ENCODE measurements at regions of chr9 and their contacts with region 1.

Region 1: GRCh38 chr9:97921959-97922724 is at the start of gene TRMO:
- DNase-seq: peak; percentile 98
- ATAC-seq: peak; percentile 85
- H3K4me3 Mint-ChIP-seq: peak within 1 kb of the TSS; percentile 89
- H3K27ac Mint-ChIP-seq: peak within 1 kb of the TSS; percentile 97
- H3K4me1 Mint-ChIP-seq: peaks cover 49% of the 10 kb centered on the region
- H3K27me3 Mint-ChIP-seq: peaks cover 2% of the 10 kb centered on the region
- total RNA-seq, gene TRMO: 18.7 to 19.2 TPM

Region 2: GRCh38 chr9:97890038-97890437 is 32.1 kb before region 1 on chr9:
- CTCF ChIA-PET with region 1: interaction called, 107 read pairs
- POLR2A ChIA-PET with region 1: interaction called, 9 read pairs
- DNase-seq: peak; percentile 76
- ATAC-seq: peak; percentile 76
- H3K4me3 Mint-ChIP-seq: no peak overlapping the region
- H3K27ac Mint-ChIP-seq: no peak overlapping the region
- H3K4me1 Mint-ChIP-seq: peaks cover 6% of the 10 kb centered on the region
- H3K27me3 Mint-ChIP-seq: no peaks in the 10 kb centered on the region

Region 3: GRCh38 chr9:97911970-97912369 is 10.2 kb before region 1 on chr9:
- CTCF ChIA-PET with region 1: interaction called, 222 read pairs
- POLR2A ChIA-PET with region 1: interaction called, 76 read pairs
- DNase-seq: no peak
- ATAC-seq: no peak
- H3K4me3 Mint-ChIP-seq: no peak overlapping the region
- H3K27ac Mint-ChIP-seq: no peak overlapping the region
- H3K4me1 Mint-ChIP-seq: peaks cover 33% of the 10 kb centered on the region
- H3K27me3 Mint-ChIP-seq: no peaks in the 10 kb centered on the region

Region 4: DNA sequence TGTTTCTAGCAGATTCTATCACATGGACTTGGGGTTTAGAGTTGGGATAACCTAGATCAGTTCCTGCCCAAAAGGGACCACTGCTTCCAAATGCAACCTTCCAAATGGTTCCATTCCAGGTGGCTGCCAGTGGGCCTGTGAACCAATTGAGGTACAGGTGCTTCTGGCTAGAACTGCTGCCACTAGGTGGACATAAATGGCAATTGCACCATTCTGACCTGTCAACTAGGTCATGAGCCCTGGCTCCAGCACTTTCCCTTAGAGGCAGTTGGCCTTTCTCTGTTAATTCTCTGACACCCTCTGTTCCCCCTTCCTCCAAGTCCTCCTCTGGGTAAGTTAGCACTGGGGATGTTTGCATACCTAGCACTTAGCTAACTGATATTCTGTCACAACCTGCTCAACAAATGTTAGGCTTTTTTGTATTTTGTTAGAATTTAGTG is 32.4 kb after region 1 on chr9:
- CTCF ChIA-PET with region 1: interaction called, 106 read pairs
- POLR2A ChIA-PET with region 1: interaction called, 7 read pairs
- DNase-seq: peak; percentile 71
- ATAC-seq: peak; percentile 98
- H3K4me3 Mint-ChIP-seq: no peak overlapping the region
- H3K27ac Mint-ChIP-seq: no peak overlapping the region
- H3K4me1 Mint-ChIP-seq: peaks cover 7% of the 10 kb centered on the region
- H3K27me3 Mint-ChIP-seq: peaks cover 6% of the 10 kb centered on the region

Region 5: DNA sequence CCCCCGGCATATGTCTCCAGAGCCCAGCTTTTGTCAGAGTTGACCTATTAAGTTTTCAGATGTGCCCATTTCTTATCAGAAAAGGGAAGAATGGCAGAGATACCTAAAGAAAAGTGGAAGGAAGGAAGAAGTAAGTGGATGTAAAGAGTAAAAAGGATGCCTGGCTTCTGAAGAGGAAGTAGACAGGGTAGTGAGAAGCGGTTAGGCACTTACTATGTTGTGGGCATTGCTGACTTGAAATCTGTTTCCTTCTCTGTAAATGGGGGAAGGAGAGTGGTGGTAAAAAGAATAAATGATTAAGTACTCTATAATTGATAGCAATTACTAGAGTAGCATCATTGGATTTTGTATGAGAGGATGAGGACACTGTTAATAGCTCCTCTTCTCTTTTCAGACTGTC is 70.9 kb after region 1 on chr9:
- CTCF ChIA-PET with region 1: interaction called, 33 read pairs
- POLR2A ChIA-PET with region 1: interaction called, 110 read pairs
- DNase-seq: no peak
- ATAC-seq: peak; percentile 76
- H3K4me3 Mint-ChIP-seq: peak overlapping the region; percentile 55
- H3K27ac Mint-ChIP-seq: peak overlapping the region; percentile 86
- H3K4me1 Mint-ChIP-seq: peaks cover 84% of the 10 kb centered on the region
- H3K27me3 Mint-ChIP-seq: no peaks in the 10 kb centered on the region

Region 6: DNA sequence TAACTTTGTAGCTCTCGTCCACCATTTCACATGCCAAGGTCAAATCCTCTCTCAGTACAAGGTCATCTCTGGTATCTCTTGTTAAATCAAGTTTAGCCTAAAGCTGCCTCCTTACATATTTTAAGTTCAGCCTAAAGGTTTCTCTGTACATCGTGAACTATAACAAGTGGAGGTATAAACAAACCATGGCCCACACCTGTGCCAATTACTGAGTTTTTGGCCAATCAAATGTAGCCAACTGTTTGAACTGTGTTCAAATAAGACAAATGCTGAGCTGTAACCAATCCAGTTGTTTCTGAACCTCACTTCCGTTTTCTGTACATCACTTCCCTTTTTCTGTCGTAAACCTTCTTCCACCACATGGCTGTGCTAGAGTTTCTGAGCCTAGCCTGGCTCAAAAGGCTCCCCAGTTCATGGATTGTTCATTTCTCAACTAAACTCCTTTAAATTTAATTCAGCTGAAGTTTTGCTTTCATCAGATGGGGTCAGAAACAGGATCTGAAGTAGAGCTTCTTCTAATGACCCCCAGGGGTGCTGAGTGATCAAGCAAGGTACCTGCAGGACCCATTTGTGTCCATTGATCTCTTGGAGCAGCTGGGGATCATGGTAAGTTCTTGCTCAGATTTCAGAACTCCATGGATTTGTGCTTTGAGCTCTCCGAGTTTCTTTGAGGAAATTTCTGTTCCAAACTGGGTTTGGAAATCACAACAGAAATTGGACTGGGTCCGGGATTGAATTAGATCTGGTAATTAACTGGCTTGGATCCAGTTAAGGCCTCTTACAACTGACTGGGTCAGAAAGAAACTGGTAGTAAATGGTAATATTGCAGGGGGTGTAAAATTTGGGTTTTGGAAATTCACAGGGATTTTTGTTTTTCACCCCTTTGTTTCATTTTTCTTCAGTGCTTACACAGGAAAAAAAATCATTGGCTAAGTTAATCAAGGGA is 123.4 kb after region 1 on chr9:
- CTCF ChIA-PET with region 1: interaction called, 41 read pairs
- POLR2A ChIA-PET with region 1: interaction called, 10 read pairs
- DNase-seq: peak; percentile 71
- ATAC-seq: peak; percentile 95
- H3K4me3 Mint-ChIP-seq: peak overlapping the region; percentile 84
- H3K27ac Mint-ChIP-seq: peak overlapping the region; percentile 93
- H3K4me1 Mint-ChIP-seq: peaks cover 42% of the 10 kb centered on the region
- H3K27me3 Mint-ChIP-seq: no peaks in the 10 kb centered on the region

Region 7: DNA sequence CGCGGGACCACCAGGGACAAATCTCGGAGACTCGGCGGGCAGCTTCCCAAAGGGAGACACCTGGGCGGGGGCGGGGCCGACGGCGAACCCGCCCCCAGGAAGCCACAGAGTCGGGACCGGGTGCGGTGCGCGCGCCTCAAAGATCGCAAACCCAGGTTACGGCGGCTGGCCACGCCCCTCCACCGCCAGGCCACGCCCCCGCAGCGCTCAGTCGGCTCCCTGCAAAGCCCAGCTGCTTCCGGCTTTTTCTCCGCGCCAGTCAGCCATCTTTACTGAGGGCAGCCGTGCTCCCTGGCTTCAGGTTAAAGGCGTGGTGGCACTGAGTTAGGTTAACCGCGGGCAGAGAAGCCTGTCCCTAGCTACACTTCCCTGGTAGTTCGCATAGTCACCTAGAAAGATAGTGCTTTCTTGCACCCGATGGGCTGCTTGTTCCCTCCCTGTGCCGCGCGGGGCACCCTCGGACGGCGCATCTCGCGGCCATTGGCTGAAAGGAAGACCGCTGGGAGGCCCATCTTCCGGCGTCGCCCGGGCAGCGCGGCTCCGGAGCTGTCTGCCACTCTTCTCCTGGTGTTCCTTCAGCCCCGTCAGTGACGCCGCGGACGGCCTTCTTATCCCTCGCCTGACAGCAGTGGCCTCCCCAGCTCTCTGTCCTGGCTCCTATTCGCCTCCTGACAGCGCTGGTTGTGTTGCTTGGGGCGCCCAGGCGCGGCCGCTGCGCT is 333.6 kb after region 1 on chr9 and contains the start of gene TBC1D2:
- CTCF ChIA-PET with region 1: interaction called, 23 read pairs
- POLR2A ChIA-PET with region 1: interaction called, 14 read pairs
- DNase-seq: peak; percentile 98
- ATAC-seq: peak; percentile 86
- H3K4me3 Mint-ChIP-seq: peak within 1 kb of the TSS; percentile 79
- H3K27ac Mint-ChIP-seq: peak within 1 kb of the TSS; percentile 98
- H3K4me1 Mint-ChIP-seq: peaks cover 17% of the 10 kb centered on the region
- H3K27me3 Mint-ChIP-seq: peaks cover 13% of the 10 kb centered on the region
- total RNA-seq, gene TBC1D2: 3.0 to 3.5 TPM